Ascending aorta (tissue), 2 donors: ENCODE measurements at regions of chr18 and their contacts with region 1.

Region 1: DNA sequence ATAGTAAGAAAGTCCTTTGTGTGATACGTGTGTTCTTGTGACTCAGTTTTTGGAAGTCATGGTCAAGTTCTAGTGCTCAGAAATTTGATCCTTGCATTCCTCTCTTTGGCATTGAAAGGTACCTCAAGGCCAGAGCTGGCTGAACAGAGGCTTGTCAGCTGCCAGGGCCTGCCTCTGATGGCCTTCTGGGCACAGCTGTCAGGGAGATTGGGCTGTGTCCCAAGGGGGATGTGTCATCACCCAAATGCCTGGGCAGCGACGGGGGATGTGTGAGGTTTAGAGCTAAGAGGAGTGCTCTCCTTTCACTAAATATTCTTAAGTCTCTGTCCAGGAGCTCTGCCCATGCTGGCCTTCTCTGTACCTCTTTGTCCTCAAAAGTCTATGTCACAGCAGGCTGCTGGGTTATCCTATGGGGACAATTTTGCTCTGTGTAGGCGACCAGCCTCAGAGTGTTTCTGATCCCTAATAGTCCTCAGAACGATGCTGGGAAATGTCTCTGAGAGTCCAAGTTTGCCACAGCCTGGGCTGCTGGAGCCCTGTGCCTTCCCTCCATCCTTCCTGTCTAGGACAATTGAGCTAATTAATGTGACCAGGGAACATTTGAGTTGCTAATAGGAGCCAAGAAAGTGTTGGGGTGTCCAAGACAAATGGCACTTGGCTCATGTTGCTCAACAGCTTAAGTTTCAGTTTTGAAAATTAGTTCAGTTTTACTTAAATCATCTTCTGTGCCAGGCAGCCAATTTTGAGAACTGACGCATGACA is 115.4 kb upstream of the ZNF521 start:
- DNase-seq: peak; percentile 10 to 81
- H3K4me3 ChIP-seq: peak overlapping the region; percentile 18 to 22
- H3K27ac ChIP-seq: peak overlapping the region; percentile 45 to 74
- H3K4me1 ChIP-seq: peaks cover 0 to 10% of the 10 kb centered on the region in 2 donors
- H3K27me3 ChIP-seq: no peaks in the 10 kb centered on the region
- CTCF ChIP-seq: no peak

Region 2: DNA sequence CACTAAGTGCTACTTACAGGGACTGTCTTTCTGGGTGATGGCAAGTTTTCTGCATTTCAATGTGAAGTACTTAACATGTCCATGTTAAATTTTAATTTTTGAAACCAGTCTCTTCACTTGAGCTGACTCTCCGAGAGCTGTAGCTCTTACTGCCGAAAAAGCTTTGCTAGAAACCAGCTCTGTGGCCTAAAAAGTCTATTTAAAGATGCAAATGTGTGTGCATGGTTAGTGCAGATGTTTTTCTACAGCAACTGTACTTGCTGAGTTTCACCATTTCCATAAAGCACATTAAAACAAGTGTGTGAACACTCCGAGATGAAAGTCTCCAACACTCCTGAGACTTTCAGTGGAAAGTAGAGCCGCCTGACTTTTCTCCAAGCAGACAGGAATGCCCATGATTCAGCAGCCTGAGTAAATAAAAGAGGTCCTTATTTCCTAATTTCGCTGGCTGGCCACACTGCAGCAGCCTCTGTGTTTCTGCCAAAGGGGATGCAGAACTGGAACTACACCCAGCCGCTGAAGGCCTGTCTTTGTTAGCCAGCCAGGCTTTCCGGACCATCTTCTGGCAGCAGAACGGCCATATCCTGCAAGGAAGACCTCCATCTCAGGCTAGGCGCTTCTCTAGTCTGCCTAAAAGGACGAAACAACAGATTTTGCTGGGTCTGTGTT is 236.6 kb before region 1 on chr18:
- intact Hi-C with region 1: loop called (anchors 5 kb)
- DNase-seq: peak; percentile 17 to 91
- H3K4me3 ChIP-seq: peak overlapping the region in 1 of 2 donors; percentile 43
- H3K27ac ChIP-seq: peak overlapping the region; percentile 68 to 80
- H3K4me1 ChIP-seq: peaks cover 0 to 21% of the 10 kb centered on the region in 2 donors
- H3K27me3 ChIP-seq: no peaks in the 10 kb centered on the region
- CTCF ChIP-seq: no peak

Region 3: DNA sequence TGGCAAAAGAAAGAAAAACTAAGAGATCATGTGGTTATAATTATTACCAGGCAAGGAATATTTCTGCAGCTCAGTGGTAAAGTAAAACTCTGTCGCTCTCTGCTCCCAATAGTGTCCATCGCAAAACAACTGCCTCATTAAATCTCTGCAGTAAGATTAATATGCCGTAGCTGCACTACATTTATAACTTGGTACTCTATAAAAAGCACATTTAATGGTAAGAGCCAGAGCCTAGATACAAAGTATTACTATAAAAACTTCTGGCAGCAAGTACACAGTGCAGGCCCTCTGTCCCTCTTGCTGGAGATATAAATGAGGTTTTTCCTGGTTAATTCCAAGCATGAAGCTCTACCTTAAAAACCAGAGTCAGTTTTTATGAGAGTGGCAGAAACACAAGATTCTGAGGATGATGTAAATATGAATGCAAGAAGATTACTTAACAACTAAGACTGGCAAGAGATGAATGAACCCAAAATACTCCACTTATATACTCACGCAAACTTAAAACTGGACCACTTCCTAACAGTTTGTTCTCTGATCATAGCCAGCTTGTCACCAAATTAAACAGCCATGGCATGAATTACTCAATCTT is 140.9 kb before region 1 on chr18:
- intact Hi-C with region 1: no loop called
- DNase-seq: no peak
- H3K4me3 ChIP-seq: no peak overlapping the region
- H3K27ac ChIP-seq: no peak overlapping the region
- H3K4me1 ChIP-seq: no peaks in the 10 kb centered on the region
- H3K27me3 ChIP-seq: no peaks in the 10 kb centered on the region
- CTCF ChIP-seq: no peak

Region 4: DNA sequence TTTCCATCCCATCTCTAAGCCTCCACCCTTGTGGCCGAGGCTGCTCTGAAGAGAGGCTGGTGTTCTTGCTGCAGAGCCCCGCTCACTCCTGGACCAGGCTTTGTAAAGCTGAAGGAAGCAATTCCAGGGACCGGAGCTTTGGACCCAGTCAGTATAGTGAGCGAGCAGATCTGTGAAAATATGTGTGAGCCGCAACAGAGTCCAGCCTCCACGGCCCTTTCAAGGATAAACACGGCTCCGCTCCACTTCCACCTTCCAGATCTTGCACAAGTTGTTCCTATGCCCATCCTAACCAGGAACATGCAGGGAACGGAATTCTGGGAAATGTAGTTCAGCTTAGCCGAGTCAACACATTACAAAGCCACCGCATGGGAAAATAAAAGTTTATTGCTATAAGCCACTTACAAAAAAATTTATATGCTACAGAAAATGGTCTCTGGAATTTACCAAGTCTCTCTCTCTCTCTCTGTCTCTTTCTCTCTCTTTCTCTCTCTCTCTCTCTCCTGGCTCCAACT is 36.2 kb after region 1 on chr18:
- intact Hi-C with region 1: loop called (anchors 5 kb)
- DNase-seq: peak in 1 of 2 donors; percentile 84
- H3K4me3 ChIP-seq: peak overlapping the region; percentile 46
- H3K27ac ChIP-seq: no peak overlapping the region
- H3K4me1 ChIP-seq: peaks cover 0 to 2% of the 10 kb centered on the region in 2 donors
- H3K27me3 ChIP-seq: no peaks in the 10 kb centered on the region
- CTCF ChIP-seq: no peak